Dendritic cell treated with granulocyte-macrophage colony-stimulating factor and Interleukin-4, amounts not matched to agents 40 ng/mL and 50 ng/mL, for 4 days (primary cell): ENCODE measurements at regions of chr12 and their contacts with region 1.

Region 1: DNA sequence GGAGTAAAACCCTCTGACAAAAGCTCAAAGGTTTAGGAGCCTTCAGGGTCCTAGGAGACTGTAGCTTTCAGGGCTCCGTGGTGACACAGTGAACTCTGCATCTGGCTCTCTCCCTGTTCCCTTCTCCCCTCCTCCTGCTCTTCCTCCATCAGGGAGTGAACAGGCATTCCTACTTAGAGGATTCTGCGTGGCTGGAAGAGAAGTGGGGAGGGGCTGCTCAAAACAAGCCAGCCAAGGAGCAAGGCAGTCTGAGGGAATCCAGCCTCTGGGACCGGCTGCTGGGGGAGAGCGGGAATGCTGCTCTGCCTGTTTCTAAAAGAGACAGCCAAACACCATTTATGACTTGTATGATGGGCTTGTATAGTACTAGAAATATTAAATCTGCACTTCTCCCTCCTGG is 49.5 kb downstream of the RBMS2 start:
- H3K4me3 Mint-ChIP-seq: no peak overlapping the region
- H3K27ac Mint-ChIP-seq: peak overlapping the region; percentile 76
- H3K4me1 Mint-ChIP-seq: peaks cover 57% of the 10 kb centered on the region
- H3K27me3 Mint-ChIP-seq: no peaks in the 10 kb centered on the region

Region 2: DNA sequence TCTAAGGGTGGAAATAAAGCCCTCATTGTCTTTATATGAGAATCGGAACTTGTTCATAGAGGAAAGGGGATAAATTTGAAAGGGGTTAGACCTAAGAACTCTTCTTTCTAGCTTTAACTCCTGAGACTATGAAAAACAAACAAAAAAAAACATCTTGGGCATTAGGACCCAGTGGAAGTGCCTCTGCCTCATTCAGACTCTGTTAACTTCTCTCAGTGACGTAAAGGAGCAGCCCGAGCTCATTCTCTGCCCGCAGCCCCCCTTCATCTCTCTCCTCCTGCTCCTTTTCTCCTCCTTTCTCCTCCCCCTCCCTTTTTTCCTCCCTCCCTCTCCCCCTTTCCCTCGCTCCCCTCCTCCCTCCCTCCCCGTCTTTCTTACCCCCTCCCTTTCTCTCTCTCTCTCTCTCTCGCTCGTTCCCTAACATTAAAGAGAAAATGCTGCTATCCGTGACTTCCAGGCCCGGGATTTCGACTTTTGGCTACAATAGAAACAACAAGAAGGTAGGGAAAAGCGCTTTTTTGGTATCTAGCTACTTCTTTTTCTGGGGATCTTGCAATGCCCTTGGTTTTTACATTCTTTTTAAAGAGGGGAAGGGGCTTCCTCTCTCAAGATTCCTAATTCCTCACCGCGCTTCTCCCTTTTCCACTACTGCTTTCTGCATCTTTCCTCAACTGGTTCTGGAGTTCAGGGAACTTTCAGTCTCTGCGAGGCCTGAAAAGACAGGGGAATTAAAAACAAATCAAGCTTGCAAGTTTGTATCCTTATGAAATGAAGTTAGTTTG is 49.3 kb before region 1 on chr12 and contains the start of gene RBMS2:
- intact Hi-C with region 1: loop called (anchors 2 kb)
- H3K4me3 Mint-ChIP-seq: peak within 1 kb of the TSS; percentile 88
- H3K27ac Mint-ChIP-seq: peak within 1 kb of the TSS; percentile 95
- H3K4me1 Mint-ChIP-seq: peaks cover 57% of the 10 kb centered on the region
- H3K27me3 Mint-ChIP-seq: no peaks in the 10 kb centered on the region

Region 3: GRCh38 chr12:57195611-57196371 is 624.7 kb after region 1 on chr12:
- intact Hi-C with region 1: no loop called
- H3K4me3 Mint-ChIP-seq: no peak overlapping the region
- H3K27ac Mint-ChIP-seq: no peak overlapping the region
- H3K4me1 Mint-ChIP-seq: no peaks in the 10 kb centered on the region
- H3K27me3 Mint-ChIP-seq: no peaks in the 10 kb centered on the region